Activated CD4-positive, alpha-beta T cell treated with anti-CD3 and anti-CD28 coated beads for 36 hours (primary cell): ENCODE measurements at regions of chr15 and their contacts with region 1.

Region 1: GRCh38 chr15:40694688-40695468 is at the start of gene RAD51:
- DNase-seq: peak; percentile 96
- ATAC-seq: peak; percentile 93
- H3K4me3 Mint-ChIP-seq: peak within 1 kb of the TSS; percentile 95
- H3K27ac Mint-ChIP-seq: peak within 1 kb of the TSS; percentile 98
- H3K4me1 Mint-ChIP-seq: peaks cover 20% of the 10 kb centered on the region
- H3K27me3 Mint-ChIP-seq: no peaks in the 10 kb centered on the region
- total RNA-seq, gene RAD51: 73.5 to 75.3 TPM

Region 2: GRCh38 chr15:40160689-40161688 is 533.9 kb before region 1 on chr15 and contains the start of gene BUB1B:
- CTCF ChIA-PET with region 1: no interaction called
- POLR2A ChIA-PET with region 1: no interaction called
- intact Hi-C with region 1: loop called in 1 of 2 experiments (anchors 2 kb)
- DNase-seq: peak; percentile 96
- ATAC-seq: peak; percentile 95
- H3K4me3 Mint-ChIP-seq: no peak within 1 kb of the TSS
- H3K27ac Mint-ChIP-seq: no peak within 1 kb of the TSS
- H3K4me1 Mint-ChIP-seq: peaks cover 8% of the 10 kb centered on the region
- H3K27me3 Mint-ChIP-seq: no peaks in the 10 kb centered on the region
- total RNA-seq, gene BUB1B: 95.3 to 99.5 TPM

Region 3: GRCh38 chr15:40593588-40594428 is 101.1 kb before region 1 on chr15 and contains the start of gene KNL1:
- CTCF ChIA-PET with region 1: interaction called, 8 read pairs
- POLR2A ChIA-PET with region 1: interaction called, 10 read pairs
- intact Hi-C with region 1: loop called (anchors 1 to 5 kb)
- DNase-seq: peak; percentile 94
- ATAC-seq: peak; percentile 86
- H3K4me3 Mint-ChIP-seq: peak within 1 kb of the TSS; percentile 87
- H3K27ac Mint-ChIP-seq: peak within 1 kb of the TSS; percentile 95
- H3K4me1 Mint-ChIP-seq: peaks cover 24% of the 10 kb centered on the region
- H3K27me3 Mint-ChIP-seq: peaks cover 6% of the 10 kb centered on the region
- total RNA-seq, gene KNL1: 26.2 to 33.5 TPM

Region 4: GRCh38 chr15:40743921-40744814 is 49.3 kb after region 1 on chr15:
- CTCF ChIA-PET with region 1: interaction called, 7 read pairs
- POLR2A ChIA-PET with region 1: interaction called, 5 read pairs
- intact Hi-C with region 1: loop called in 1 of 2 experiments (anchors 2 kb)
- DNase-seq: peak; percentile 82
- ATAC-seq: peak; percentile 93
- H3K4me3 Mint-ChIP-seq: peak overlapping the region; percentile 4
- H3K27ac Mint-ChIP-seq: peak overlapping the region; percentile 71
- H3K4me1 Mint-ChIP-seq: peaks cover 25% of the 10 kb centered on the region
- H3K27me3 Mint-ChIP-seq: no peaks in the 10 kb centered on the region

Region 5: DNA sequence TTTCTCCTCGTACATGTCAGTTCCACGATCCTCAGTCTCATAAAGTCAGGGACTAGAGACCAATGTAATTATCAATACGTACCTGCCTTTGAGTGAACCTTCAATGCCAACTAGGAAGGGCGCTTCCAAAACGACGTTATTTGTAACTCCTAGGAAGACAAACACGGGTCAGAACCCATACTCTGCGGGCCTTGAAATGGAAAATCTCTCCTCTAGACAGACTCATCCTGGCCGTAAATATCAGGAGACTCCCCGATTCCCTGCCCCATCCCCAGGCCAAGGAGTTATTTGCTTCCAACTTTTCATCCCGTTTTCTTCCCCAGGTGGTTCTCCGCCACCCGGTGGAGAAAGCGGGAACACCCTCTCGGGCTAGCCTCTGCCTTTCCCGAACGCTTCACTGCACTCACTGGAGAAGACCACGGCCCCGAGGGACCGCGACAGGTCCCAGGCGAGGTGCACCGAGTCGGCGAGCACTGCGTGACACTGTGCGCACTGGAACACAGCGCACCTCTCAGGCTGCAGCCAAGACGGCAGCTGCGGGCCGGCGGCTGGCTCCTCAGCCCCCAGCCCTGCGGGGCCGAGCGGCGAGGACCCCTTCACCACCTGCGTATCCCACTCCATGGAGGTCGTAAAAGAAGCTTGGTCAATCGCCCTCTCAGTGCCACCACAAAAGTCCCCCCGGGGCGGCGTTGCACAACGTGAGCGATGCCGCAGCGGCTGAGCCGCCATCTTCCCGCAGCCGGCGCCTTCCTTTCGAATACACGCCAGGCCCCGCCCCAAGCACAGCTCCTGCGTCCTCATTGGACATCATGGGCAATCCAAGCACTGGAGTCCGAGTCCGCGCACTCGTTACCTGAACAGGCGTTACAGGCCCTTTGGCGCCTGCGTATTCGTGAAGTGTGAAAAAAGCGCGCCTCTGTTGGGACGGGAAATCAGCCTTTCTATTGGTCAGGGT is 637.2 kb after region 1 on chr15 and contains the start of gene OIP5:
- CTCF ChIA-PET with region 1: no interaction called
- POLR2A ChIA-PET with region 1: interaction called, 3 read pairs
- intact Hi-C with region 1: loop called in 1 of 2 experiments (anchors 2 kb)
- DNase-seq: peak; percentile 99
- ATAC-seq: peak; percentile 98
- H3K4me3 Mint-ChIP-seq: peak within 1 kb of the TSS; percentile 91
- H3K27ac Mint-ChIP-seq: peak within 1 kb of the TSS; percentile 92
- H3K4me1 Mint-ChIP-seq: peaks cover 26% of the 10 kb centered on the region
- H3K27me3 Mint-ChIP-seq: no peaks in the 10 kb centered on the region
- total RNA-seq, gene OIP5: 11.5 to 14.0 TPM